ENCODE measurements at regions of chr2 and their contacts with region 1.

Region 1: DNA sequence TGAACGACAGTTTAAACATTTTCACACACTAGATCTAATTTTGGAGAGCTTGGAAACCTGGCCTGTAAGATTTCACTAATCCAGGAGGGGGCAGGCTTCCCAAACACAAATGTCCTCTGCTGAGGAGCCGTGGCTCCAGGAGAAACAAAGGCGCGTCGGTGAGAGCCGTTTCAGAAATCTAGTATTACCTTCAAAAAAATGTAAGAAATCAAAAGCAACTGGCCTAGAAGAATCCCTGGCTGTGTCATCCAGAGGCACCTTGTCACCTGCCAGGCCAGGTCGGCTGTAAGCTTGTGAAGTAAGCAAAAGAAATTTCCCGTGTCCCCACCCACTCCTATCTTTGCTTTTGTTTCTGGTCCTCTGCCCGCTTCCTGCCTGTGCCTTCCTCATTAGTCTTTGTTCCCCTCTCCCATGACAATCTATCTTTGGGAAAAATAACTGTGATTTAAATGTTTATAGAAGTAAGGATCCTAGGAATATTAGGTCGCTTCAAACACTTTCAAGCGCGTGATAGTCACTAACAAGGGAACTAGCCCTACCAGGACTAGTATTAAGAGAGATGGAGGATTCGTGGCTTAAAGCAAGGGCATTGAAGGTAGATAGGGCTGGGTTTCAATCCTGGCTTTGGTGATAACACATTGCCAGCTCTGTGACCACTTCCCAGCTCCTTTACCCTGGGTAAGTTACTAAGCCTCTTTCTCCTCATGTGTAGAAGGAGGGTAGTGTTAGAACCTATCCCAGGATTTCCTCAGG is 99.5 kb upstream of the STK39 start:
- DNase-seq: peak; percentile 77
- H3K4me3 Mint-ChIP-seq: peak overlapping the region; percentile 70
- H3K27ac Mint-ChIP-seq: peak overlapping the region; percentile 62
- H3K4me1 Mint-ChIP-seq: peaks cover 20% of the 10 kb centered on the region
- H3K27me3 Mint-ChIP-seq: no peaks in the 10 kb centered on the region
- CTCF ChIP-seq: peak; percentile 59

Region 2: GRCh38 chr2:168687314-168687713 is 340.4 kb after region 1 on chr2:
- CTCF ChIA-PET with region 1: interaction called, 9 read pairs
- intact Hi-C with region 1: loop called (anchors 1 kb)
- DNase-seq: peak; percentile 13
- H3K4me3 Mint-ChIP-seq: no peak overlapping the region
- H3K27ac Mint-ChIP-seq: no peak overlapping the region
- H3K4me1 Mint-ChIP-seq: no peaks in the 10 kb centered on the region
- H3K27me3 Mint-ChIP-seq: no peaks in the 10 kb centered on the region
- CTCF ChIP-seq: no peak

Region 3: GRCh38 chr2:168705534-168706470 is 358.9 kb after region 1 on chr2:
- CTCF ChIA-PET with region 1: no interaction called
- intact Hi-C with region 1: loop called (anchors 1 kb)
- DNase-seq: no peak
- H3K4me3 Mint-ChIP-seq: no peak overlapping the region
- H3K27ac Mint-ChIP-seq: no peak overlapping the region
- H3K4me1 Mint-ChIP-seq: peaks cover 17% of the 10 kb centered on the region
- H3K27me3 Mint-ChIP-seq: no peaks in the 10 kb centered on the region
- CTCF ChIP-seq: no peak

Region 4: DNA sequence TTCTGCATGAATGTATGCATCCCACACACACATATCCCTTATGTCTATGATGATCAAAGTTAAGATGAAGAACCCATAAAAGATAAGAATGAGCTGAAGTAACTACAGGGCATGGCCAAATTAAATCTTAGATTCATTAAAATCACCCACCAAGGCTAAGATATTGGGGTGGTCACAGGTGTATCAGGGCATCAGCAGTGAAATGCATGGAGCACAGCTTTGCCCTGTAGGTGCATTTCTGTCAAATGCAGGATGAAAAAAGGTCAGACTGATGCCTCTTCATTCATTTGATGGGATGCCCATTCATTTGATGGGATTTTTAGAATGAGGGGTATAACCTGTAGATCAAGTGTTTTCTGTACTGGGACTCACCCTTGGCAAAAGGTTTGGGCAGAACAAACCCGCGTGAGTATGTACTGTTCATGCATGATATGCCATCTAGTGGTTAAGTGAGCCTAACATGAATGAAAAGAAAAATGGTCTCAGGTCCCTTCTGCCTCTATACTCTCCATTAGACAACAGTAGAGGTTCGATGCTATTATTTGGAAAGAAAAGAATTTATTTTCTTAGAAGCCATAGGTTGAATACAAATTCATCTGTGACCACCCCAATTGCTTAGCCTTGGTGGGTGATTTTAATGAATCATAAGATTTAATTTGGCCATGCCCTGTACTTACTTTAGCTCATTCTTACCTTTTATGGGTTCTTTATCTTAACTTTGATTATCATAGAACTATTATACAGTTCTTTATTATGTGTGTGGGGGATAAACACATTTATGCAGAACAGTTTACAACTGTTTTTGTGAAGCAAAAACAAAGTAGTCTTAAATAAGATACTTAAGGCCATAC is 412.3 kb after region 1 on chr2:
- CTCF ChIA-PET with region 1: no interaction called
- intact Hi-C with region 1: loop called (anchors 1 kb)
- DNase-seq: peak; percentile 37
- H3K4me3 Mint-ChIP-seq: no peak overlapping the region
- H3K27ac Mint-ChIP-seq: no peak overlapping the region
- H3K4me1 Mint-ChIP-seq: peaks cover 8% of the 10 kb centered on the region
- H3K27me3 Mint-ChIP-seq: no peaks in the 10 kb centered on the region
- CTCF ChIP-seq: peak; percentile 49

Region 5: GRCh38 chr2:168920504-168921157 is 573.7 kb after region 1 on chr2:
- CTCF ChIA-PET with region 1: no interaction called
- intact Hi-C with region 1: loop called (anchors 1 kb)
- DNase-seq: peak; percentile 44
- H3K4me3 Mint-ChIP-seq: no peak overlapping the region
- H3K27ac Mint-ChIP-seq: no peak overlapping the region
- H3K4me1 Mint-ChIP-seq: peaks cover 14% of the 10 kb centered on the region
- H3K27me3 Mint-ChIP-seq: no peaks in the 10 kb centered on the region
- CTCF ChIP-seq: peak; percentile 68